H1 (cell line): ENCODE measurements at regions of chr18 and their contacts with region 1.

Region 1: GRCh38 chr18:50143295-50143694 is 51.7 kb downstream of the MYO5B start:
- DNase-seq: no peak
- H3K4me3 ChIP-seq: no peak overlapping the region
- H3K27ac ChIP-seq: no peak overlapping the region
- H3K4me1 ChIP-seq: no peaks in the 10 kb centered on the region
- H3K27me3 ChIP-seq: no peaks in the 10 kb centered on the region
- CTCF ChIP-seq: peak; percentile 12 to 24 (median 16); a peak in 3 of 4 replicates
- EP300 ChIP-seq: no peak
- POLR2A ChIP-seq: no peak
- RAD21 ChIP-seq: peak; percentile 34 to 50

Region 2: DNA sequence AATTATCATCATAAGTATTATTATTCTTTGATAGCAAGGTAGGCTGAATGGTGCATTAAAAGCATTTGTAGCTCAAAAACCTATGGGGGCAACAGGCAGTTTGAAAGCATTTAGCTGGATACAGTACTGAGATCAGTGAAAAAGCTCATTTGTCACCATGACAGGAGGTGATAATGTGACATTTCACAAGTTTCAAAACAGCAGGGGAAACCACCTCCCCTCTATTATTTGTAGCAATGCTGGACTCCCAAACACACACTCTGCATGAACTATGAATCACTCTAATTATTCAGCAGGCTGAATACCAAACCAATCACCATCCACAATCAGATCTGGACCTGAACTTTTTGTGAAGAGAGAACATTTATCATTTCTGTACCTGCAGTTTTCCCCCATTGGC is 11.7 kb before region 1 on chr18:
- CTCF ChIA-PET with region 1: interaction called, 11 read pairs
- POLR2A ChIA-PET with region 1: no interaction called
- DNase-seq: no peak
- H3K4me3 ChIP-seq: no peak overlapping the region
- H3K27ac ChIP-seq: no peak overlapping the region
- H3K4me1 ChIP-seq: peaks cover 3 to 11% (median 8%) of the 10 kb centered on the region in 4 experiments
- H3K27me3 ChIP-seq: no peaks in the 10 kb centered on the region
- CTCF ChIP-seq: no peak
- EP300 ChIP-seq: no peak
- POLR2A ChIP-seq: no peak
- RAD21 ChIP-seq: no peak

Region 3: DNA sequence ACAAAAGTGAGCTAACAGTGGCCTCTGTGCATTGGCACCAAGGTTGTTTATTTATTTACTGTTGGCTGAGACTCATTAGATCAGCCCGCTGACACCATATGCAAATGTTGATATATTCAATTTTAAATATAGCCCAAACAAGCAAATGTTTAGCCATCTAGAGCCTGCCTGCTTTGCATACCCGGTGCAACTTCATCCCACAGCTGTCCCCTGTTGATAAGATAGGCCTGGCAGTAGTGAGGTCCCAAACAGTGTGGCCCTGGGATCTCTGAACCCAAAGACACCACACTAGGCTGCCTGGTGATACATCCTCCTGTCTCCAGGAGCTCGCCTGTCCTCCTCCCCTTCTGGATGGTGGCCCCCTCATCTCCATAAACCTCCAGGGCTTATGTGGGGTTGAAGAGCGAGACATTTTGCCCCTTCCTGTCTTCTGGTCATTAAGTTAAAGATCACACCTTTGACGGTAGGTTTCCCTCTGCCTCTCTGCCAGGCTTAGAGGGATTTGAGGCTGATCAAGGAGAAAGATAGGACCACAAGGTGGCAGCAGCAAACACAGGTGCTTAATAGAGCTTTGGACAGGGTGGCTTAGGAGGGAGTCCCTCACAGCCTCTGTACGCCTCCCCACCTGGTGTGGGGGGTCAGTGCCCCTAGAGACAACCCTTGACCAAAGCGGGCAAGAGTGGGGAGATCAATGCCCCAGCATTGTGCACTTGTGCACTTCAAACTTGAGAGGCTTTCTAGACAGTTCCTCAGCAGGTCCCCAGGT is 75.3 kb after region 1 on chr18:
- CTCF ChIA-PET with region 1: no interaction called
- POLR2A ChIA-PET with region 1: no interaction called
- DNase-seq: peak in 1 of 2 experiments; percentile 60
- H3K4me3 ChIP-seq: no peak overlapping the region
- H3K27ac ChIP-seq: no peak overlapping the region
- H3K4me1 ChIP-seq: no peaks in the 10 kb centered on the region
- H3K27me3 ChIP-seq: no peaks in the 10 kb centered on the region
- CTCF ChIP-seq: peak; percentile 20 to 76 (median 69)
- EP300 ChIP-seq: no peak
- POLR2A ChIP-seq: no peak
- RAD21 ChIP-seq: peak; percentile 64 to 70